ENCODE measurements at regions of chr2 and their contacts with region 1.

Region 1: DNA sequence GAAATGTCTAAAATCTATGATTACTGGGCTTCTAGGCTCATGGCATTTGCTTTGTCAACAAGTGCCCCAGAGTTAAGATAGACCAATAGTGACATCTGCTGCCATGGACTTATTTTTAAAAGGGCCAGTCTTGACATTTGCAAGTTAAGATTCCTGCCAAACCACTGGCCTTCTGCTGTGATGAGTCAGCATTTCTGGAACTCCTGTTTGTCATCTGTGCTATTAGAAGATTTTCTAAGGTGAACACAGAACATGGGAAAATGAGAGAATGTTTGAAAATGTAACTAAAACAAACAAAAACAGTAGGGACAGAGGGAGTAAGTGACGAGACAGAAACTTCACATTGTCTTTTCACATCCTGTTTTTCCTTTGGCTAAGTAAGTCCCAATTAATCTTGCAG is 93.7 kb upstream of the WDR75 start:
- DNase-seq: peak; percentile 62 to 69
- H3K4me3 ChIP-seq: no peak overlapping the region
- H3K4me3 Mint-ChIP-seq: no peak overlapping the region
- H3K27ac Mint-ChIP-seq: peak overlapping the region; percentile 4
- H3K4me1 ChIP-seq: peaks cover 6% of the 10 kb centered on the region
- H3K4me1 Mint-ChIP-seq: peaks cover 17% of the 10 kb centered on the region
- H3K27me3 ChIP-seq: no peaks in the 10 kb centered on the region
- H3K27me3 Mint-ChIP-seq: no peaks in the 10 kb centered on the region
- CTCF ChIP-seq: peak in 1 of 2 experiments; percentile 19

Region 2: GRCh38 chr2:188765522-188766470 is 581.7 kb before region 1 on chr2:
- CTCF ChIA-PET with region 1: no interaction called
- POLR2A ChIA-PET with region 1: no interaction called
- intact Hi-C with region 1: loop called (anchors 1 kb)
- DNase-seq: peak; percentile 48 to 62
- H3K4me3 ChIP-seq: no peak overlapping the region
- H3K4me3 Mint-ChIP-seq: no peak overlapping the region
- H3K27ac Mint-ChIP-seq: no peak overlapping the region
- H3K4me1 ChIP-seq: no peaks in the 10 kb centered on the region
- H3K4me1 Mint-ChIP-seq: no peaks in the 10 kb centered on the region
- H3K27me3 ChIP-seq: no peaks in the 10 kb centered on the region
- H3K27me3 Mint-ChIP-seq: peaks cover 2% of the 10 kb centered on the region
- CTCF ChIP-seq: peak; percentile 39 to 75

Region 3: DNA sequence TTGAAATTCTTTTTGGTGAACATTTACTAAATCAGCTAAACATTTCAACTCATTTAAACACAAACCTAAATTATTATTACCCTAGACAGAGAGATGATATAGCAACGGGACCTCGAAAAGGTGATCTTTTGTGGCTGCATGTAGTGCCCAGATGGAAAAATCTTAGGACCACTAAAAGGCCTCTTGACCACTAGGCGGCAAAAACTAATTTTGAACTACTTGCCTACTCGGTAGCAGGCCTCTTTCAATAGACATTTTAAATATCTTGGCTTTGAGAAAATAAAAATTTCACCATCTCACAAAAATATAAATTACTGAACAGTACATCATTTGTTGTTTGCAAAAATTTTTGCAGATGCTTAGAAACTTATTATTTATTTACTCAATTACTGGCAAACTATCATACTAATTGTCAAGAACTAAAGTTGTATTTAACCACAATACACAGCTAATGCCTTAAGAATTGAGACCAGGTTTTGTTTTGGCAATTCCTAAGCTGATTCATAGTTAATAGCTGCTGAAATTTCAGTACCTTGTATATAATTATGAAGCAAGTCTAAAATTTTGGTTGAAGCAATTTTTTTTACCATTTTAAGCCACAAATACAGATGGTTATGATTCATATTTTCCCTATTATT is 364.0 kb before region 1 on chr2:
- CTCF ChIA-PET with region 1: no interaction called
- POLR2A ChIA-PET with region 1: no interaction called
- intact Hi-C with region 1: loop called (anchors 1 kb)
- DNase-seq: peak in 1 of 2 experiments; percentile 42
- H3K4me3 ChIP-seq: no peak overlapping the region
- H3K4me3 Mint-ChIP-seq: no peak overlapping the region
- H3K27ac Mint-ChIP-seq: no peak overlapping the region
- H3K4me1 ChIP-seq: peaks cover 4% of the 10 kb centered on the region; the same call in 1 of the 2 replicates
- H3K4me1 Mint-ChIP-seq: peaks cover 7% of the 10 kb centered on the region
- H3K27me3 ChIP-seq: no peaks in the 10 kb centered on the region
- H3K27me3 Mint-ChIP-seq: no peaks in the 10 kb centered on the region
- CTCF ChIP-seq: peak; percentile 63 to 67

Region 4: DNA sequence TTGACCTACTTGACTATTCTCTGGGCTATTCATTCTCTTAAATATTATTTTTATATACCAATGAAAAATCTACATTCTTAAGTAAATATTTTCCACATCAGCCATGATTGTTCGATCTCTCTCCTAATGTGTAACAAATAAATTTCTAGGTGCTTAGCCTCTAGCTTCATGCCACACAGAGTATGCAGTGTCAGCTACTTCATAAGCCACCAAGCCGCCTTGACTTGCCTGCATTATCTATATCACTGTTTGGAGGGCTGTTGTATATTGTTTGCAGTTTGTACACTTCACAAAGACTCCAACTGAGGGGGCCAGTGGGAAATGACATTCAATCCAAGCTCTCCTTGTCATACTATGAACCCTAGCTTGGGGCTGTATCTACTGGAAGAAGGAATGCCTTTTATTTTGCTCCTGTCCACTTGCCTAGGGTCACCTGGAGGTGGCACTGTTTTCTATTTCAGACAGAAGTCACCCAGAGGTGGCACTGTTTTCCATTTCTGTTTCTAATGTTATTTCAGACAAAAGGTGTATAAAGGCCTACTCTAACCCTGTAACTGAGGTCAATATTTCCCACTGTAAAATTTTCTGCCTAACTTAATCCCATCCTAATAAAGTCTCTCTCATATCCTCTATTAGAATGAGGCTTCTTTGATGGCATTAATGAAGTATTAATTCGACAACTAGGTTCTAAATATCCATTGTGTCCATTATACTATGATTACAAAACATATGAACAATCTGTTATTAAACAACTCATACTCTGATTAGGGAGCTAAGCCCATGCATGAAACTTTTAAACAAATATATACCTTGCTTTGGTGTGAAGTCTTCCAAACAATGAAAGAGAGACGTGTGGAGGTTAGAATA is 204.4 kb before region 1 on chr2:
- CTCF ChIA-PET with region 1: no interaction called
- POLR2A ChIA-PET with region 1: no interaction called
- intact Hi-C with region 1: loop called (anchors 1 kb)
- DNase-seq: peak; percentile 75 to 80
- H3K4me3 ChIP-seq: no peak overlapping the region
- H3K4me3 Mint-ChIP-seq: no peak overlapping the region
- H3K27ac Mint-ChIP-seq: peak overlapping the region; percentile 17
- H3K4me1 ChIP-seq: peaks cover 12% of the 10 kb centered on the region
- H3K4me1 Mint-ChIP-seq: peaks cover 20% of the 10 kb centered on the region
- H3K27me3 ChIP-seq: no peaks in the 10 kb centered on the region
- H3K27me3 Mint-ChIP-seq: no peaks in the 10 kb centered on the region
- CTCF ChIP-seq: peak; percentile 93 to 99

Region 5: GRCh38 chr2:189379287-189379630 is 31.7 kb after region 1 on chr2:
- CTCF ChIA-PET with region 1: no interaction called
- POLR2A ChIA-PET with region 1: no interaction called
- intact Hi-C with region 1: loop called (anchors 2 kb)
- DNase-seq: peak; percentile 74 to 81
- H3K4me3 ChIP-seq: no peak overlapping the region
- H3K4me3 Mint-ChIP-seq: peak overlapping the region; percentile 53
- H3K27ac Mint-ChIP-seq: peak overlapping the region; percentile 63
- H3K4me1 ChIP-seq: peaks cover 56% of the 10 kb centered on the region
- H3K4me1 Mint-ChIP-seq: peaks cover 29% of the 10 kb centered on the region
- H3K27me3 ChIP-seq: no peaks in the 10 kb centered on the region
- H3K27me3 Mint-ChIP-seq: no peaks in the 10 kb centered on the region
- CTCF ChIP-seq: no peak

Region 6: DNA sequence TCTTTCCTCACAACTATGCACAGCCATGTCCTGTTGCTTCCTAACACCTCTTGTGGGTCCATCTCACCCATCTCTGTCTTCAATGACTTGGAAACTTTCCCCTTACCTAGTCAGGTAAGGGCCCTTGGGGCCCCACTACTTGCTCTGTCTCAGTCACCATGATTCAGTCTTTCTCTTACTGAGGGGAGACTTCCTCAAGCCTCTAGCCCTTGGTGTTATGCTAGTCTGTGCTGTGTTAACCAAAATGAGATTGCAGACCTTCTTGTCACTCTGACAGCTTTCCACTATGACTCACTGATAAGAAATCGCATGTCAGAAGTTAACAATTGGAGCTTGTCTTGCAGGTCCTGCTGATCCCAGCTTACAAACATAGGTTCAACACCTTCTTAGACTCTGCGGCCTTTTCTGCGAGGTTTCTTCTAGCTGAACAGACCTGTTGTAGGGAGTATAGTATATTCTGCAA is 159.0 kb after region 1 on chr2:
- CTCF ChIA-PET with region 1: no interaction called
- POLR2A ChIA-PET with region 1: no interaction called
- intact Hi-C with region 1: no loop called
- DNase-seq: peak; percentile 66 to 69
- H3K4me3 ChIP-seq: no peak overlapping the region
- H3K4me3 Mint-ChIP-seq: peak overlapping the region; percentile 32
- H3K27ac Mint-ChIP-seq: peak overlapping the region; percentile 93
- H3K4me1 ChIP-seq: peaks cover 33% of the 10 kb centered on the region
- H3K4me1 Mint-ChIP-seq: peaks cover 25% of the 10 kb centered on the region
- H3K27me3 ChIP-seq: no peaks in the 10 kb centered on the region
- H3K27me3 Mint-ChIP-seq: no peaks in the 10 kb centered on the region
- CTCF ChIP-seq: no peak